CD14-positive monocyte (primary cell): ENCODE measurements at regions of chr2 and their contacts with region 1.

Region 1: GRCh38 chr2:234335661-234336228 is 161.1 kb downstream of the ARL4C start:
- DNase-seq: peak; percentile 75 to 87 (median 87)
- H3K4me3 ChIP-seq: no peak overlapping the region
- H3K4me3 Mint-ChIP-seq: no peak overlapping the region
- H3K27ac ChIP-seq: no peak overlapping the region
- H3K27ac Mint-ChIP-seq: peak overlapping the region; percentile 57 to 87 (median 74)
- H3K4me1 ChIP-seq: no peaks in the 10 kb centered on the region
- H3K4me1 Mint-ChIP-seq: peaks cover 8% of the 10 kb centered on the region
- H3K27me3 ChIP-seq: no peaks in the 10 kb centered on the region
- H3K27me3 Mint-ChIP-seq: peaks cover 7 to 21% (median 10%) of the 10 kb centered on the region in 3 donors
- CTCF ChIP-seq: no peak

Region 2: DNA sequence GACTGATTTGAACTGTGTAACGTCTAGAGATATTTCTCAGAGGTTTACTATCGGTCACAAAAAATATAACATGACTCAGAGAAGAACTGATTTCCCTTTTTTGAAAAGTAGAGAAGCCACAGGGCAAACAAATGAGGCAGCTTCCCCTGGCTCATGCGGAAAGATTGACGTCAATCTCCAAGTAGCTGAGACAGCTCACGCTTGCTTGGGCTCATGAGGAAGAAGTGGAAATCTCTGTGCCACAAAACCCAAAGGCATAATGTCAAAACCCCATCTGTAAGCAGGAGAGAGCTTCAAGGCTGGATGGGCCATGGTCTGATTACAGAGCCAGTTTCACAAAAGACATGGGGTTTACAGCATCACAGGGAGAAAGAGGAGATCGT is 26.9 kb before region 1 on chr2:
- intact Hi-C with region 1: loop called in 1 of 2 experiments (anchors 2 kb)
- DNase-seq: peak; percentile 93 to 96 (median 95)
- H3K4me3 ChIP-seq: no peak overlapping the region
- H3K4me3 Mint-ChIP-seq: peak overlapping the region in 1 of 2 donors; percentile 47
- H3K27ac ChIP-seq: peak overlapping the region; percentile 80 to 94
- H3K27ac Mint-ChIP-seq: peak overlapping the region; percentile 89 to 98 (median 96)
- H3K4me1 ChIP-seq: peaks cover 21 to 26% of the 10 kb centered on the region in 2 donors
- H3K4me1 Mint-ChIP-seq: peaks cover 35% of the 10 kb centered on the region
- H3K27me3 ChIP-seq: peaks cover 3 to 4% of the 10 kb centered on the region in 2 donors
- H3K27me3 Mint-ChIP-seq: peaks cover 2 to 16% (median 10%) of the 10 kb centered on the region in 3 donors
- CTCF ChIP-seq: no peak

Region 3: GRCh38 chr2:234425619-234426603 is 90.2 kb after region 1 on chr2:
- intact Hi-C with region 1: no loop called
- DNase-seq: peak; percentile 61 to 73 (median 72)
- H3K4me3 ChIP-seq: peak overlapping the region in 1 of 3 experiments; percentile 25
- H3K4me3 Mint-ChIP-seq: peak overlapping the region; percentile 12 to 59
- H3K27ac ChIP-seq: peak overlapping the region; percentile 91 to 92
- H3K27ac Mint-ChIP-seq: peak overlapping the region; percentile 92 to 98 (median 95)
- H3K4me1 ChIP-seq: peaks cover 62 to 72% of the 10 kb centered on the region in 2 donors
- H3K4me1 Mint-ChIP-seq: peaks cover 64% of the 10 kb centered on the region
- H3K27me3 ChIP-seq: no peaks in the 10 kb centered on the region
- H3K27me3 Mint-ChIP-seq: peaks cover 0 to 5% (median 1%) of the 10 kb centered on the region in 3 donors
- CTCF ChIP-seq: no peak